Activated naive CD4-positive, alpha-beta T cell treated with anti-CD3 and anti-CD28 coated beads for 36 hours (primary cell): ENCODE measurements at regions of chr2 and their contacts with region 1.

Region 1: GRCh38 chr2:43131024-43131889 is 95.1 kb downstream of the ZFP36L2 start:
- DNase-seq: peak; percentile 94
- H3K4me3 Mint-ChIP-seq: peak overlapping the region; percentile 20
- H3K27ac Mint-ChIP-seq: peak overlapping the region; percentile 18
- H3K4me1 Mint-ChIP-seq: peaks cover 87% of the 10 kb centered on the region
- H3K27me3 Mint-ChIP-seq: no peaks in the 10 kb centered on the region

Region 2: DNA sequence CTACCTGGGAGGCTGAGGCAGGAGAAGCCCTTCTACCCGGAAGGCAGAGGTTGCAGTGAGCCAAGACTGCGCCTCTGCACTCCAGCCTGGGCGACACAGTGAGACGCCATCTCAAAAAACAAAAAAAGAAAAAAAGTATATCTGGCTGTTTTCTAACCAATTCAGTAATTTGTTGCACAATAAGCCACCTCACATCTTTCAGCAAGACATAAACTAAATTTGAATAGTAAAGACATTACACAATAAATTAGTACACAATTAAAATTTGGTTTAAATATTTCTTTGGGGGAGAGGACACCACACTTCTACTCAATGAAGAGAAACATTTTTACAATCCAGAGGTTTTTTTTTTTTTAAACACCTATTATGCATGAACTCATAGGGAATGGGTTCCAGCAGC is 598.9 kb before region 1 on chr2:
- CTCF ChIA-PET with region 1: no interaction called
- intact Hi-C with region 1: no loop called
- DNase-seq: no peak
- H3K4me3 Mint-ChIP-seq: no peak overlapping the region
- H3K27ac Mint-ChIP-seq: no peak overlapping the region
- H3K4me1 Mint-ChIP-seq: no peaks in the 10 kb centered on the region
- H3K27me3 Mint-ChIP-seq: no peaks in the 10 kb centered on the region

Region 3: GRCh38 chr2:42859006-42859552 is 272.2 kb before region 1 on chr2:
- CTCF ChIA-PET with region 1: no interaction called
- intact Hi-C with region 1: loop called (anchors 2 kb)
- DNase-seq: peak; percentile 91
- H3K4me3 Mint-ChIP-seq: no peak overlapping the region
- H3K27ac Mint-ChIP-seq: no peak overlapping the region
- H3K4me1 Mint-ChIP-seq: peaks cover 12% of the 10 kb centered on the region
- H3K27me3 Mint-ChIP-seq: no peaks in the 10 kb centered on the region

Region 4: GRCh38 chr2:43059183-43059897 is 71.9 kb before region 1 on chr2:
- CTCF ChIA-PET with region 1: interaction called, 3 read pairs
- intact Hi-C with region 1: loop called (anchors 1 kb)
- DNase-seq: peak; percentile 85
- H3K4me3 Mint-ChIP-seq: peak overlapping the region; percentile 1
- H3K27ac Mint-ChIP-seq: peak overlapping the region; percentile 62
- H3K4me1 Mint-ChIP-seq: peaks cover 26% of the 10 kb centered on the region
- H3K27me3 Mint-ChIP-seq: no peaks in the 10 kb centered on the region

Region 5: GRCh38 chr2:43090317-43090716 is 40.9 kb before region 1 on chr2:
- CTCF ChIA-PET with region 1: no interaction called
- intact Hi-C with region 1: no loop called
- DNase-seq: no peak
- H3K4me3 Mint-ChIP-seq: no peak overlapping the region
- H3K27ac Mint-ChIP-seq: no peak overlapping the region
- H3K4me1 Mint-ChIP-seq: peaks cover 3% of the 10 kb centered on the region
- H3K27me3 Mint-ChIP-seq: no peaks in the 10 kb centered on the region

Region 6: GRCh38 chr2:43169987-43170386 is 38.7 kb after region 1 on chr2:
- CTCF ChIA-PET with region 1: interaction called, 28 read pairs
- intact Hi-C with region 1: loop called (anchors 1 kb)
- DNase-seq: peak; percentile 89
- H3K4me3 Mint-ChIP-seq: peak overlapping the region; percentile 42
- H3K27ac Mint-ChIP-seq: peak overlapping the region; percentile 61
- H3K4me1 Mint-ChIP-seq: peaks cover 81% of the 10 kb centered on the region
- H3K27me3 Mint-ChIP-seq: no peaks in the 10 kb centered on the region

Region 7: GRCh38 chr2:43293744-43294695 is 162.8 kb after region 1 on chr2:
- CTCF ChIA-PET with region 1: no interaction called
- intact Hi-C with region 1: loop called (anchors 1 kb)
- DNase-seq: peak; percentile 77
- H3K4me3 Mint-ChIP-seq: no peak overlapping the region
- H3K27ac Mint-ChIP-seq: peak overlapping the region; percentile 81
- H3K4me1 Mint-ChIP-seq: peaks cover 29% of the 10 kb centered on the region
- H3K27me3 Mint-ChIP-seq: no peaks in the 10 kb centered on the region